Left lung (tissue), 14 donors: ENCODE measurements at regions of chr3 and their contacts with region 1.

Region 1: DNA sequence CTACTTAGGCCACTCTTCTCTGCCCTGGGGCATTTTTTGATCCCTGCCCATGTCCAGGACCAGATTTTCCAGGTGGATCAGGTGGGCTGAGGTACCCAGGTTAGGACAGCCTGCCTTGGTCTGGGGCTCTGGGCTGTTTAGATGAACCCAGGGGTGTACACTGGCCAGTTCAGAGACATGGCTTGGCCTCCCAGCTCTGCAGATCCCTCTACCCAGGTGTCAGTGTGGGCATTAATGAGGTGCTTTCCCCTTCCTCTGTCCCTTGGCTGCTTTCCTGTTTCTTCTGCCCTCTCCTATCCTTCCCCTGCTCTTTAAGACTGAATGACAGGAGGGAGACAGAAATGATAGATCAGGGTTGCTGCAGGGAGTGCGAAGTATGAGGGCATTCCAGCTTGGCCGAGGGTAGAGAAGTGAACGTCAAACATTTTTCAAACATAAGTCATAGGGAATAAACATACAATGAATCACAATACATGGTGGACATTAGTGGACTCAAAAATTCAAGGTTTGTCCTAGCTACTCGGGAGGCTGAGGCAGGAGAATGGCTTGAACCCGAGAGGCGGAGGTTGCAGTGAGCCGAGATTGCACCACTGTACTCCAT is 30.5 kb downstream of the RTP1 start:
- DNase-seq: no peak
- ATAC-seq: no peak
- H3K4me3 ChIP-seq: no peak overlapping the region
- H3K27ac ChIP-seq: no peak overlapping the region
- H3K4me1 ChIP-seq: no peaks in the 10 kb centered on the region
- H3K27me3 ChIP-seq: no peaks in the 10 kb centered on the region
- CTCF ChIP-seq: no peak

Region 2: DNA sequence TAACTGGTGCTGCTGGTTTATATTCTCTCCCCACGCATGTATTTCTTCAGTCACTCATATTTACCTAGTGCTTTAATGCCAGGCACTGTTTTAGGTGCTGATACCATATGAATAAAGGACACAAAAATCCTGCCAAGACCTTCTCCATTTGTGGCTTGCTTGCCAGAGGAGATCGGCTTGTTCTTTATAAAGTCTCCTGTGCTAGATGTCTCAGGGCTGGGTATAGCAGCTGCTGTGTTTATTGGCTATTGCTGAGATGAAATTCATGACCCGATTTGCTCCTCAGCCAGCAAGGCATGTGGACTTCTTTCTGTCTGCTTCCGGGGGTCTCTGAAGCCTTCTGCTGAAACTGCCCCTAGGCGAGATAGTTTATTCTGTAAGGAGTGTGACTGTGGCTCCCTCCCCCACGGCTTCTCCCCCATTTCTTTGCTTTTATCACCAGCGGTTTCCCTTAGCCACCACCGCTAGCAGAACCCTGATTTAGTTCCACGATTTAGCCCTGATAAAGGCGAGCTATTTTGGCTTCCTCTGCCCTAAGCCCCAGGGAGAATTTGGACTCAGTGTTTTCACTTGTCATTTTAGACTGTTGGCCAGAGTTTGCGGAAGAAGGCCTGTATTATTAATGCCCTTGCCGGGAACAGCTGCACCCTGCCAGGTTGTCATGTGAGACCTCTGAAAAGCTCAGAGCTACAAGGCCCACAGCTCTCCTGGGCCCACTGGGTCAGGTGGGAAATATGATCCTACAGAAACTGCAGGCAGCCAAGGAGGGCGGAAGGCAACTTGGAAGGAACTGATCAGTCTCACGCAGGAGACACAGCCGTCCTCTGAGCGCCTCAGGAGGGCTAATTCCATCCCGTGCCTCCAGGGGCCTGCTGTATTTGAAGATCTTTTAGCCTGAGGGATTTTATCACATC is 250.7 kb before region 1 on chr3:
- intact Hi-C with region 1: no loop called
- DNase-seq: peak in 1 of 4 donors; percentile 19
- ATAC-seq: peak; percentile 57
- H3K4me3 ChIP-seq: no peak overlapping the region
- H3K27ac ChIP-seq: no peak overlapping the region
- H3K4me1 ChIP-seq: no peaks in the 10 kb centered on the region
- H3K27me3 ChIP-seq: no peaks in the 10 kb centered on the region
- CTCF ChIP-seq: no peak

Region 3: GRCh38 chr3:187016639-187017345 is 211.0 kb before region 1 on chr3:
- intact Hi-C with region 1: no loop called
- DNase-seq: no peak
- ATAC-seq: peak; percentile 72
- H3K4me3 ChIP-seq: no peak overlapping the region
- H3K27ac ChIP-seq: peak overlapping the region in 1 of 2 donors; percentile 23
- H3K4me1 ChIP-seq: peaks cover 8 to 49% of the 10 kb centered on the region in 2 donors
- H3K27me3 ChIP-seq: no peaks in the 10 kb centered on the region
- CTCF ChIP-seq: no peak

Region 4: DNA sequence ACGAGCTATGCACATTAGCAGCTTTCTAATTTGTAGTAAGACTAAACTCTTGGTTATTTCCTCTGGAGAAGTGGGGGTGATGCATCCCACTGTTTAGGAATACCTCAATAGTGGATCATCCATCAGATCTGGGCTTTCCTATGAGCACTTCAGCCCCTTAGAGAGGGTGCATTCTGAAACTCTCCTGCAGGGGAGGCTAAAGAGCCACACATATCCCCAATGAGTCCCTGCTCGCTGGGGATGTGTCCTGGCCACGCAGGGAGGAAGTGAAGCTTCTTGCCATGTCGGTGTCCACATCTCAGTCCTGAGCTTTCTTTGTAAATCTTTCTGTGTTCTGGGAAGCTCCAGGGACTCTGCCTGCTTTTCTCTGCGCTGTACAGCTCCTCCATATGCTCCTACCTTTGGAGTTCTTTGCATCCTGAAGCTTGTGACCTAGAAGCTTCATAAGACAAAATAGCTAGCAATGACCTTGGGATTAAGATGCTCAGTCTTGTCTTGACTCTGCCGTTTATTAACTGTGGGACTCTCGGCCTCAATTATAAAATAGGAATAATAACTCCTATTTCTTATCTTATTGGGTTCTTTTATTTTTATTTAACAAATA is 92.0 kb after region 1 on chr3:
- intact Hi-C with region 1: loop called in 1 of 2 experiments (anchors 10 kb)
- DNase-seq: peak in 2 of 4 donors; percentile 28 to 50
- ATAC-seq: peak; percentile 98
- H3K4me3 ChIP-seq: no peak overlapping the region
- H3K27ac ChIP-seq: no peak overlapping the region
- H3K4me1 ChIP-seq: peaks cover 0 to 12% of the 10 kb centered on the region in 2 donors
- H3K27me3 ChIP-seq: peaks cover 0 to 31% of the 10 kb centered on the region in 2 donors
- CTCF ChIP-seq: peak; percentile 68 to 77